ENCODE measurements at regions of chr1 and their contacts with region 1.

Region 1: GRCh38 chr1:31548907-31549808 is 27.2 kb upstream of the TINAGL1 start:
- DNase-seq: peak; percentile 93
- H3K4me3 Mint-ChIP-seq: peak overlapping the region; percentile 64
- H3K27ac Mint-ChIP-seq: peak overlapping the region; percentile 69
- H3K4me1 Mint-ChIP-seq: peaks cover 7% of the 10 kb centered on the region
- H3K27me3 Mint-ChIP-seq: no peaks in the 10 kb centered on the region
- CTCF ChIP-seq: peak; percentile 91

Region 2: DNA sequence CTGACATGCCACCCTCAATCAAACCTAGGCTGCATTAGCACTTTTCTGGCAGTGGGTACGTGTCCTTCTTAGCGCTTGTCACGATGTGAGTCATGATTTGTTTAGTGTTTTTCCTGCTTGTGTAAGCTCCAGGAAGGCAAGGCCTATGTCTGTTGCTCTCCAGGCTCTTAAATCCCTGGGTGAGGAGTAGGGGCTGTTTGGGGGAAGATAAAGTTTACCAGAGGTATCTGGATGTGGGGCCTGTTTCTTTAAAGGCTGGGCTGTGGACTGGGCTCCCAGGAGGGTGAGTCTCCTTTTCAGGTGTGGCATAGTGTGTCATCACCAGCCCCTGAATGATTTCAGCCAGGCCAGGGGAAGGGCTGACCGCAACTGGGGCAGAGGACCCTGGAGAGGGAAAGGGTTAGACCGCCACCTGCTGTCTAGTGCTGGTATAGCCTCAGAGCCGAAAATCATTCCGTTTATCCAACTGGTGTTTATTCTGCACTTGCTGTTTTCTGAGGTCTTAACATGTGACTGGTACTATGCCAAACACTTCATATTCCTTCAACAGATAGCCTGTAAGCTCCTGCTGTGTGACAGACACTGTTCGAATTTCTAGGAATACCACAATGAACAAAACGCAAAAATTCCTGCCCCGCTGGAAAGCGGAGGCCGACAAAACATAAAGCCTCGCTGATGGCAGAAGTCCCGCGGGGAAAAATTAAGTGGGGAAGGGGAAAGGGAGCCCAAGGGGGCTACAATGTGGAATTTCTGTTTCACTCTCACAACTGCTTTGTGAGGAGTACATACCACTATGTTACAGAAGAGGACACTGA is 126.4 kb before region 1 on chr1:
- CTCF ChIA-PET with region 1: interaction called, 44 read pairs
- intact Hi-C with region 1: loop called (anchors 2 kb)
- DNase-seq: peak; percentile 90
- H3K4me3 Mint-ChIP-seq: no peak overlapping the region
- H3K27ac Mint-ChIP-seq: peak overlapping the region; percentile 80
- H3K4me1 Mint-ChIP-seq: peaks cover 35% of the 10 kb centered on the region
- H3K27me3 Mint-ChIP-seq: no peaks in the 10 kb centered on the region
- CTCF ChIP-seq: peak; percentile 79

Measured in Calu3 (cell line).